Vagina (tissue), 2 donors: ENCODE measurements at regions of chr4 and their contacts with region 1.

Region 1: GRCh38 chr4:112231779-112232713 is at the start of gene AP1AR:
- DNase-seq: peak in 1 of 2 donors; percentile 93
- H3K4me3 ChIP-seq: peak within 1 kb of the TSS; percentile 93 to 98
- H3K27ac ChIP-seq: peak within 1 kb of the TSS; percentile 98
- H3K4me1 ChIP-seq: peaks cover 24% of the 10 kb centered on the region
- H3K27me3 ChIP-seq: no peaks in the 10 kb centered on the region
- CTCF ChIP-seq: no peak
- POLR2A ChIP-seq: peak in 1 of 2 donors; percentile 69
- total RNA-seq, gene AP1AR: 28.2 TPM

Region 2: DNA sequence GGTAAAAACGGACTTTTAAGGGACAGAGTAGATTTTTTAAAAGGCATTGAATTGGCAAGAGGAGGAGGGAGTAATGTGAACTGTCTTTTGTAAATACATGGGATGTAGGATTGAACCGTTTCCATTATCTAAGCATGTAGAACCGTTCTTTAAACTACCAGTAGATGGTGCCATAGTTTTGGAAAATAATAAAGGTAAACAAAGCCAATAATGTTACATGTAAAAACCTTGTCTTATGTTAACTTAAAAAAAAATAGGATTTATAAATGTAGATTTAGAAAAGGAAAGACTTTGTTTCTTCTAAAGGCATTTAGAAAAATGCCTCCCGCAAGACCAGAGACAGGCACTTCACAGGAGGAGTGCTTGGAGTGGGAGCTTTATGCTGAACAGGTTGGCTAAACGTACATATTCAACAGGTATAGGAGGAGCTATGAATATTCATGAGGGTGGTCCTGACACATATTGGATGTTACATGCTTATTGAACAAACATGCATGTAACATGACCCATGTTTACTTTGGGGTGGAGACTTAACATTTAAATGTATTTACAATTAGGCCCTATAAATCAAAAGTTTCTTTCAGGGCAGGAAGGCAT is 132.2 kb before region 1 on chr4:
- intact Hi-C with region 1: loop called (anchors 1 kb)
- DNase-seq: no peak
- H3K4me3 ChIP-seq: no peak overlapping the region
- H3K27ac ChIP-seq: no peak overlapping the region
- H3K4me1 ChIP-seq: no peaks in the 10 kb centered on the region
- H3K27me3 ChIP-seq: no peaks in the 10 kb centered on the region
- CTCF ChIP-seq: peak in 2 of 3 experiments; percentile 51 to 54
- POLR2A ChIP-seq: no peak

Region 3: GRCh38 chr4:112284662-112285411 is 52.8 kb after region 1 on chr4:
- intact Hi-C with region 1: loop called (anchors 10 kb)
- DNase-seq: no peak
- H3K4me3 ChIP-seq: peak overlapping the region; percentile 75 to 78
- H3K27ac ChIP-seq: peak overlapping the region; percentile 88
- H3K4me1 ChIP-seq: peaks cover 31% of the 10 kb centered on the region
- H3K27me3 ChIP-seq: no peaks in the 10 kb centered on the region
- CTCF ChIP-seq: no peak
- POLR2A ChIP-seq: no peak

Region 4: DNA sequence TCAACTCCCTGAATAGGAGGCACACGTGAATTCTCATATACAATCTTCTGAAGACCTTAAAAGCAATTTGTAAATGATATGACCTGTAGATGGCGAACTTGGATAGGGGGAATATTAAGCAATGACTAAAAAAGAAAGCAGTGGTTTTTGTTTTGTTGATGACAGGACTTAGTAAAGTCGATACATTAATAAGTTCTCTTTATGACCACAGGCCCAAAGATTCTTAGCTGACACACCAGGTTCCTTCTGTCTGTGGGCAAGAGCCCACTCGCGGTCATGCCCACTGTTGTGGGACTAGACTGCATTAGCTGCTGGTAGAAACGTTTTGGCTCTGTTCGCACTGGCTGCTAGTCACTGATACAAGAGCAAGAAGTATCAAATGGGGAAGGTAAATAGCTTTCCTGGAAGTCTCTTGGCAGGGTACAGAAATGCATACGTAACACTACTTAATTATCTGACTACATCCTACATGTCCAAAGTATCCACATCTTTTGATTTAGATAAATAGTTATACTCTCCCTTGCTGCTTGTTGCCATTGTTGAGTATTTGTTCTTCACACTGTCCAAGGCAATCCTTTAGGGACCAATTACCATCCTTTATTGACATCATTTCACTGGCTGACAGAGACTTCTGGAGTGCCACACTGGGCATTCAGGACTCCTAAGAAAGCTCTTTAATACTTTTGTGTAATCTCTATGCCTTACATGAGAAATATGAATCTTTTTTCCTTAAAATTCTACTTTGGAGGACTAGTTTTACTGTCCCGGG is 96.1 kb after region 1 on chr4:
- intact Hi-C with region 1: no loop called
- DNase-seq: no peak
- H3K4me3 ChIP-seq: no peak overlapping the region
- H3K27ac ChIP-seq: no peak overlapping the region
- H3K4me1 ChIP-seq: no peaks in the 10 kb centered on the region
- H3K27me3 ChIP-seq: no peaks in the 10 kb centered on the region
- CTCF ChIP-seq: peak in 1 of 3 experiments; percentile 12
- POLR2A ChIP-seq: no peak